B cell (primary cell): ENCODE measurements at regions of chr16 and their contacts with region 1.

Region 1: DNA sequence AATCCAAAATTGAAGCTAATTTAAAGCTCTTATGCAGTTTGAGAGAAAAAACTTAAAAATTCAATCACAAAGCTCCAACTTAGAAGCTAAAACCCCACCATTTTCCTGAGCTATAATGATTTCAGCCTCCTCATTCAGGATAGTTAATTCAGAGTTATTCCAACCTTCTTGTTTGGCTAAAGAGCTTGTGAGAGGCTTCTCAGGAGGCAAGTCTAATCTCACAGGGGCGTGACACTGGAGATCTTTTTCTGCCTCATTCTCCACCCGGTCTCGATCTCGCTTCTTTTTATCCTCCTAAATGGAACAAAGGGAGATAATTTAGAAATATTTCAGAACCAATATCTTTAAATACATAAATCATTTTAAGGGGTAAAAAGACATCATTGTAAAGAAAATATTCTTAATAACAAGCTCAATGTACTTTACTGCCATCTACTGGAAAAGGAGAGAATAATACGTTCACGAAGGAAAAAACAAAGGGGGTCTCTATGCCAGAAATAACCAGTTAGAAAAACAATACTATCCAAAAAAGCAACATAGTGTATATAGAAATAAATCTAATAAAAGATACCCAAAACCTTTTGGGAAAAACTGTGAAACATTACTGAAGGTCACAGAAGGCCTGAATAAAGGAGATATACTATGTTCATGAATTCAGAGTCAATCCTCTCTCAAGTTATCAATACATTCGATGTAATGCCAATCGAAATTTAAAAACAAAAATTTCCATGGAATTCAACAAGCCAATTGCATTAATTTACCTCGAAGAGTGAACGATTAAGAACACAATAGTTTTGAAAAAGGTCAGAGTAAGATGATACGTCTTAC is 13.9 kb downstream of the BRD7 start:
- DNase-seq: peak; percentile 49
- ATAC-seq: peak; percentile 28
- H3K4me3 ChIP-seq: no peak overlapping the region
- H3K4me3 Mint-ChIP-seq: no peak overlapping the region
- H3K27ac ChIP-seq: no peak overlapping the region
- H3K27ac Mint-ChIP-seq: no peak overlapping the region
- H3K4me1 ChIP-seq: no peaks in the 10 kb centered on the region
- H3K4me1 Mint-ChIP-seq: peaks cover 10% of the 10 kb centered on the region
- H3K27me3 ChIP-seq: no peaks in the 10 kb centered on the region
- H3K27me3 Mint-ChIP-seq: no peaks in the 10 kb centered on the region
- CTCF ChIP-seq: peak; percentile 88

Region 2: GRCh38 chr16:50245417-50246298 is 109.2 kb before region 1 on chr16:
- CTCF ChIA-PET with region 1: interaction called, 29 read pairs
- POLR2A ChIA-PET with region 1: interaction called, 4 read pairs
- intact Hi-C with region 1: loop called (anchors 1 kb)
- DNase-seq: peak; percentile 57
- ATAC-seq: peak; percentile 94
- H3K4me3 ChIP-seq: peak overlapping the region in 4 of 5 experiments; percentile 60 to 69 (median 62)
- H3K4me3 Mint-ChIP-seq: peak overlapping the region; percentile 74
- H3K27ac ChIP-seq: no peak overlapping the region
- H3K27ac Mint-ChIP-seq: peak overlapping the region; percentile 50
- H3K4me1 ChIP-seq: peaks cover 6 to 15% of the 10 kb centered on the region in 2 donors
- H3K4me1 Mint-ChIP-seq: peaks cover 11% of the 10 kb centered on the region
- H3K27me3 ChIP-seq: peaks cover 0 to 11% (median 4%) of the 10 kb centered on the region in 4 experiments
- H3K27me3 Mint-ChIP-seq: no peaks in the 10 kb centered on the region
- CTCF ChIP-seq: peak; percentile 39

Region 3: GRCh38 chr16:50273681-50274325 is 81.0 kb before region 1 on chr16:
- CTCF ChIA-PET with region 1: interaction called, 46 read pairs
- POLR2A ChIA-PET with region 1: interaction called, 3 read pairs
- intact Hi-C with region 1: no loop called
- DNase-seq: peak; percentile 88
- ATAC-seq: peak; percentile 81
- H3K4me3 ChIP-seq: peak overlapping the region; percentile 12 to 84 (median 80)
- H3K4me3 Mint-ChIP-seq: peak overlapping the region; percentile 98
- H3K27ac ChIP-seq: peak overlapping the region; percentile 93 to 97
- H3K27ac Mint-ChIP-seq: peak overlapping the region; percentile 100
- H3K4me1 ChIP-seq: peaks cover 63 to 74% of the 10 kb centered on the region in 2 donors
- H3K4me1 Mint-ChIP-seq: peaks cover 75% of the 10 kb centered on the region
- H3K27me3 ChIP-seq: no peaks in the 10 kb centered on the region
- H3K27me3 Mint-ChIP-seq: no peaks in the 10 kb centered on the region
- CTCF ChIP-seq: no peak

Region 4: GRCh38 chr16:50335196-50335958 is 19.5 kb before region 1 on chr16:
- CTCF ChIA-PET with region 1: interaction called, 329 read pairs
- POLR2A ChIA-PET with region 1: no interaction called
- intact Hi-C with region 1: no loop called
- DNase-seq: no peak
- ATAC-seq: peak; percentile 86
- H3K4me3 ChIP-seq: no peak overlapping the region
- H3K4me3 Mint-ChIP-seq: peak overlapping the region; percentile 75
- H3K27ac ChIP-seq: peak overlapping the region; percentile 73 to 90
- H3K27ac Mint-ChIP-seq: peak overlapping the region; percentile 96
- H3K4me1 ChIP-seq: peaks cover 0 to 63% of the 10 kb centered on the region in 2 donors
- H3K4me1 Mint-ChIP-seq: peaks cover 63% of the 10 kb centered on the region
- H3K27me3 ChIP-seq: no peaks in the 10 kb centered on the region
- H3K27me3 Mint-ChIP-seq: no peaks in the 10 kb centered on the region
- CTCF ChIP-seq: no peak

Region 5: DNA sequence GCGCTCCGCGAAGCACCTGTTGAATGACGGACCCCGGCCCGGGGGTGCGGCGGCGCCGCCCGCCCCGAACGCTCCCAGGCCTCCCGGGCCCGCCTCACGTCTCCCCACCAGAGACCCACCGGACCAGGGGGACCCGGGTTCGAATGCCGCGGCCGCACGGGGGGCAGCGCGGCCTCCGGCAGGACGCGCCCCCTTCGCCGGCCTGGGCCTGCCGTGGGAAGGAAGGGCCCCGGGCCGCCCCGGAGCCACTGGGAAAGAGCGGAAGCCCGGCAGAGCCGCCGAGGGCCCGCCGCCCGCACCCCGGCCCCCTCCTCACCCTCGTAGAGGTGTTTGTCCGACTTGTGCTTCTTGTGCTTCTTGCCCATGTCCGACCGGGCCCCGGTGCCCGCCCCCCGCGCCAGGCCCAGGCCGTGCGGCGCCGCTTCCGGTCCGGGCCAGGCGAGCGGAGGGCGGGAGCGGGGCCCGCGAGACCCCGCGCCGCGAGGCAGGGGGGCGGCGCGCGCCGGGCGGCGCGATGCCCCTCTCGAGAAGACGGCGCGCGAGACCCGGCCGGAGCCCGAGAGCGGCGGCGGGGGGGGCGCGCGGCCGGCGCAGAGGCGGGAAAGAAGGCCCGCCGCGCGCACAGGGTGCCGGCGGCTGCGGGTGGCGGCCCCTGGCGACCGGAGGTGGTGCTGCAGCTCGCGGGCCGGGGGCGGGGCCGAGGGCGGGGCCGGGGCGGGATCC is 13.7 kb after region 1 on chr16 and contains the start of gene BRD7:
- CTCF ChIA-PET with region 1: interaction called, 28 read pairs
- POLR2A ChIA-PET with region 1: no interaction called
- intact Hi-C with region 1: loop called (anchors 1 kb)
- DNase-seq: peak; percentile 85
- ATAC-seq: peak; percentile 95
- H3K4me3 ChIP-seq: peak within 1 kb of the TSS; percentile 45 to 82 (median 66)
- H3K4me3 Mint-ChIP-seq: peak within 1 kb of the TSS; percentile 91
- H3K27ac ChIP-seq: peak within 1 kb of the TSS; percentile 57 to 88
- H3K27ac Mint-ChIP-seq: peak within 1 kb of the TSS; percentile 88
- H3K4me1 ChIP-seq: peaks cover 26 to 32% of the 10 kb centered on the region in 2 donors
- H3K4me1 Mint-ChIP-seq: peaks cover 41% of the 10 kb centered on the region
- H3K27me3 ChIP-seq: no peaks in the 10 kb centered on the region
- H3K27me3 Mint-ChIP-seq: peaks cover 4% of the 10 kb centered on the region
- CTCF ChIP-seq: peak; percentile 56
- total RNA-seq, gene BRD7: 64.5 and 69.7 TPM in 2 replicates

Region 6: DNA sequence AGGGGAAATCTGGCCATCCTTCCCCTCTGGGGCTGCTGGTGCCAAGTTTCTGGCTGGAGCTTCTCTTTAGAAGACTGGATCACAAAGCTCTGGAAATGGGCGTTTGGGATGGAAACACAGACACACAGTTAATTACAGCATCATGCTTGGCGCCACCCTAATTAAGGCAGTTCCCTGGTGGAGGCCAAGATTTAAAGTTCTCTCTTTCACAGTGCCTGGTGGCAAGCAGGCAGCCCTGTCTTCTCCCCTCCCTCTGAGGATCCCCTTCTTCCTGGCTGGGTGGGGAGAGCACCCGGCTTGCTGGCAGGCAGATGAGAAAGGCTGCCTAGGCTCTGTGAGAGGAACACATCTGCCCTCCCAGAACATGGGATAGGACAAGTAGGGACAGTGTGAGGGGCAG is 134.3 kb after region 1 on chr16:
- CTCF ChIA-PET with region 1: no interaction called
- POLR2A ChIA-PET with region 1: no interaction called
- intact Hi-C with region 1: no loop called
- DNase-seq: no peak
- ATAC-seq: no peak
- H3K4me3 ChIP-seq: no peak overlapping the region
- H3K4me3 Mint-ChIP-seq: no peak overlapping the region
- H3K27ac ChIP-seq: no peak overlapping the region
- H3K27ac Mint-ChIP-seq: no peak overlapping the region
- H3K4me1 ChIP-seq: no peaks in the 10 kb centered on the region
- H3K4me1 Mint-ChIP-seq: no peaks in the 10 kb centered on the region
- H3K27me3 ChIP-seq: peaks cover 0 to 5% (median under 1%) of the 10 kb centered on the region in 4 experiments
- H3K27me3 Mint-ChIP-seq: peaks cover 18% of the 10 kb centered on the region
- CTCF ChIP-seq: no peak

Region 7: GRCh38 chr16:50665128-50665878 is 310.5 kb after region 1 on chr16:
- CTCF ChIA-PET with region 1: interaction called, 35 read pairs
- POLR2A ChIA-PET with region 1: no interaction called
- intact Hi-C with region 1: no loop called
- DNase-seq: peak; percentile 81
- ATAC-seq: peak; percentile 71
- H3K4me3 ChIP-seq: peak overlapping the region; percentile 43 to 59 (median 49)
- H3K4me3 Mint-ChIP-seq: peak overlapping the region; percentile 86
- H3K27ac ChIP-seq: peak overlapping the region in 1 of 2 donors; percentile 7
- H3K27ac Mint-ChIP-seq: peak overlapping the region; percentile 79
- H3K4me1 ChIP-seq: peaks cover 10 to 21% of the 10 kb centered on the region in 2 donors
- H3K4me1 Mint-ChIP-seq: peaks cover 25% of the 10 kb centered on the region
- H3K27me3 ChIP-seq: no peaks in the 10 kb centered on the region
- H3K27me3 Mint-ChIP-seq: no peaks in the 10 kb centered on the region
- CTCF ChIP-seq: peak; percentile 93